ENCODE measurements at regions of chr11 and their contacts with region 1.

Region 1: GRCh38 chr11:131674051-131674755 is 303.8 kb downstream of the NTM start:
- DNase-seq: peak; percentile 39
- H3K4me3 Mint-ChIP-seq: no peak overlapping the region
- H3K27ac Mint-ChIP-seq: no peak overlapping the region
- H3K4me1 Mint-ChIP-seq: peaks cover 3% of the 10 kb centered on the region
- H3K27me3 Mint-ChIP-seq: no peaks in the 10 kb centered on the region

Region 2: DNA sequence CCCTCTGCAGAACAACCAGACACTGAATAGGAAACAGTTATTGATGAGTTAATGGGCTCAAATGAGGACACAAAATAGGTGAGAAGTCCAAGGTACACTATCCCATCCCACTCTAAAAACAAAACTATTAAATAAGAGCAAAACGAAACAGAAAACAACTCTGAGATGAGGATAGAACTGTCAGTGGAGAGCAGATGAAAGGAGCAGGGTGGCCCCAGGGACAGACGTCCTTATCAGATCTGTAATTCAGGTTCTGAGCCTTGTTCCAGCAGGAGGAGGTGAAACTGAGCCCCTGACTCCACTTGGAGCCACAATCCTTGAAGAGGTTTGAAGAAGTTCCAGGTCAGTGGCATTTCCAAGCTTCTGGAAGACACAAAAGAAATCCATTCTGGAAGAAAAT is 749.4 kb before region 1 on chr11:
- intact Hi-C with region 1: loop called (anchors 5 kb)
- DNase-seq: no peak
- H3K4me3 Mint-ChIP-seq: no peak overlapping the region
- H3K27ac Mint-ChIP-seq: no peak overlapping the region
- H3K4me1 Mint-ChIP-seq: peaks cover 6% of the 10 kb centered on the region
- H3K27me3 Mint-ChIP-seq: peaks cover 14% of the 10 kb centered on the region

Region 3: GRCh38 chr11:131064373-131064991 is 609.7 kb before region 1 on chr11:
- intact Hi-C with region 1: loop called (anchors 5 kb)
- DNase-seq: no peak
- H3K4me3 Mint-ChIP-seq: no peak overlapping the region
- H3K27ac Mint-ChIP-seq: no peak overlapping the region
- H3K4me1 Mint-ChIP-seq: no peaks in the 10 kb centered on the region
- H3K27me3 Mint-ChIP-seq: no peaks in the 10 kb centered on the region

Region 4: GRCh38 chr11:131246663-131247062 is 427.5 kb before region 1 on chr11:
- intact Hi-C with region 1: loop called (anchors 5 kb)
- DNase-seq: no peak
- H3K4me3 Mint-ChIP-seq: no peak overlapping the region
- H3K27ac Mint-ChIP-seq: no peak overlapping the region
- H3K4me1 Mint-ChIP-seq: no peaks in the 10 kb centered on the region
- H3K27me3 Mint-ChIP-seq: peaks cover 18% of the 10 kb centered on the region

Region 5: DNA sequence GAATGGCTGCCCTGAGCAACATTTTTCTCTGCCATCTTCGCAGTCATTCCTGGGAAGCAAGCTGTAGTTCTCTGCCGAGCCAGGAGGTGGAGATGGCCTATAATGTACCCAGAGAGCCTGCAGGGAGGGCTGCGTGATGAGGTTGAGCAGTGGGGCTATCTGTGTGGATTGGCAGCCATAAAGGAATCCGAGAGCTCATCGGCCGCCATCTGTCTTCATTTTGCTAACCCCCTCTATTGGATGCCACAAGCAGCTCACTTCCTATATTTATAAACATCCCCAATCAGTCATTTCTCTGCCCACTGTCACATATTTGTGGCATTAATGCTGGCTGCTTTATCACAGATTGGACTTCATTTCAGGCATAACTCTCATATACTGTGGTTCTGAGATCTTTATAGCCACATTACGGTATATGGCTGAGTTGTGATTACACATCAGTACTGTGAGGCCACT is 94.2 kb before region 1 on chr11:
- intact Hi-C with region 1: loop called (anchors 2 kb)
- DNase-seq: no peak
- H3K4me3 Mint-ChIP-seq: no peak overlapping the region
- H3K27ac Mint-ChIP-seq: no peak overlapping the region
- H3K4me1 Mint-ChIP-seq: no peaks in the 10 kb centered on the region
- H3K27me3 Mint-ChIP-seq: no peaks in the 10 kb centered on the region

Region 6: GRCh38 chr11:132099692-132100091 is 425.5 kb after region 1 on chr11:
- intact Hi-C with region 1: no loop called
- DNase-seq: no peak
- H3K4me3 Mint-ChIP-seq: no peak overlapping the region
- H3K27ac Mint-ChIP-seq: no peak overlapping the region
- H3K4me1 Mint-ChIP-seq: no peaks in the 10 kb centered on the region
- H3K27me3 Mint-ChIP-seq: no peaks in the 10 kb centered on the region